ENCODE measurements at regions of chr12 and their contacts with region 1.

Region 1: DNA sequence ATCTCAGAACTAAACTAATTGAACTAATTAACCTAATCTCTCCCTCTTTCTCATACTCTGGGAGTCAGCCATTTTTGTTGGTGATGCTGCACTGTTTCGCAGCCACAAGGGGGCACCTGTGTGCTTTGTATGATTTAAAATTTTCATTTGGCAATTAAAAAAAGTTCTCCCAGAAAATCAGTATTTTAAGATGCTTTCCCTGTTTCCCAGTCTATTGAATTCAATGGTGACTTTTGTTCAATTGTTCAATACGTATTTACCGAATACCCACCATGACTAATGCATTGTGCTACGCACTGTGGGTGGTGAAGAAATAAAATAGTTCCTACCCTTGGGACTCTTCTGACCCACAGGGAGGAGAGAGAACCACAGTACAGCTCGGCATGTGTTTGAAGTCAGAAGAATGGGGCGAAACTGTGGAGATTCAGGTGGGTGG is 63.7 kb downstream of the ZNF664 start:
- DNase-seq: no peak
- H3K4me3 ChIP-seq: no peak overlapping the region
- H3K27ac ChIP-seq: no peak overlapping the region
- H3K4me1 ChIP-seq: no peaks in the 10 kb centered on the region
- H3K27me3 ChIP-seq: no peaks in the 10 kb centered on the region
- CTCF ChIP-seq: peak; percentile 88 to 93 (median 89)
- POLR2A ChIP-seq: no peak

Region 2: GRCh38 chr12:123972457-123973401 is 64.0 kb before region 1 on chr12 and contains the starts of genes CCDC92 and ZNF664:
- intact Hi-C with region 1: no loop called
- DNase-seq: peak; percentile 84 to 88
- H3K4me3 ChIP-seq: peak within 1 kb of the TSS; percentile 87 to 95 (median 95)
- H3K27ac ChIP-seq: peak within 1 kb of the TSS; percentile 94 to 98
- H3K4me1 ChIP-seq: no peaks in the 10 kb centered on the region
- H3K27me3 ChIP-seq: no peaks in the 10 kb centered on the region
- CTCF ChIP-seq: no peak
- POLR2A ChIP-seq: no peak
- total RNA-seq, gene CCDC92: 17.4 to 40.0 (median 24.6) TPM
- total RNA-seq, gene ZNF664: 78.3 to 113 (median 97.8) TPM

Region 3: GRCh38 chr12:124321040-124321481 is 284.4 kb after region 1 on chr12:
- intact Hi-C with region 1: loop called (anchors 5 kb)
- DNase-seq: peak in 1 of 2 donors; percentile 70
- H3K4me3 ChIP-seq: no peak overlapping the region
- H3K27ac ChIP-seq: no peak overlapping the region
- H3K4me1 ChIP-seq: no peaks in the 10 kb centered on the region
- H3K27me3 ChIP-seq: no peaks in the 10 kb centered on the region
- CTCF ChIP-seq: peak; percentile 75 to 93 (median 86)
- POLR2A ChIP-seq: no peak

Region 4: GRCh38 chr12:124545508-124546418 is 509.1 kb after region 1 on chr12:
- intact Hi-C with region 1: loop called (anchors 10 kb)
- DNase-seq: no peak
- H3K4me3 ChIP-seq: peak overlapping the region in 1 of 3 donors; percentile 46
- H3K27ac ChIP-seq: peak overlapping the region; percentile 12 to 76
- H3K4me1 ChIP-seq: peaks cover 30 to 40% of the 10 kb centered on the region in 2 donors
- H3K27me3 ChIP-seq: no peaks in the 10 kb centered on the region
- CTCF ChIP-seq: no peak
- POLR2A ChIP-seq: no peak

Region 5: GRCh38 chr12:124771462-124772288 is 735.0 kb after region 1 on chr12:
- intact Hi-C with region 1: loop called (anchors 5 kb)
- DNase-seq: peak; percentile 80 to 82
- H3K4me3 ChIP-seq: no peak overlapping the region
- H3K27ac ChIP-seq: no peak overlapping the region
- H3K4me1 ChIP-seq: peaks cover 0 to under 1% of the 10 kb centered on the region in 2 donors
- H3K27me3 ChIP-seq: no peaks in the 10 kb centered on the region
- CTCF ChIP-seq: peak; percentile 94 to 98 (median 96)
- POLR2A ChIP-seq: no peak

Measured in breast epithelium (tissue), 4 donors.